ENCODE measurements at regions of chr2 and their contacts with region 1.

Region 1: DNA sequence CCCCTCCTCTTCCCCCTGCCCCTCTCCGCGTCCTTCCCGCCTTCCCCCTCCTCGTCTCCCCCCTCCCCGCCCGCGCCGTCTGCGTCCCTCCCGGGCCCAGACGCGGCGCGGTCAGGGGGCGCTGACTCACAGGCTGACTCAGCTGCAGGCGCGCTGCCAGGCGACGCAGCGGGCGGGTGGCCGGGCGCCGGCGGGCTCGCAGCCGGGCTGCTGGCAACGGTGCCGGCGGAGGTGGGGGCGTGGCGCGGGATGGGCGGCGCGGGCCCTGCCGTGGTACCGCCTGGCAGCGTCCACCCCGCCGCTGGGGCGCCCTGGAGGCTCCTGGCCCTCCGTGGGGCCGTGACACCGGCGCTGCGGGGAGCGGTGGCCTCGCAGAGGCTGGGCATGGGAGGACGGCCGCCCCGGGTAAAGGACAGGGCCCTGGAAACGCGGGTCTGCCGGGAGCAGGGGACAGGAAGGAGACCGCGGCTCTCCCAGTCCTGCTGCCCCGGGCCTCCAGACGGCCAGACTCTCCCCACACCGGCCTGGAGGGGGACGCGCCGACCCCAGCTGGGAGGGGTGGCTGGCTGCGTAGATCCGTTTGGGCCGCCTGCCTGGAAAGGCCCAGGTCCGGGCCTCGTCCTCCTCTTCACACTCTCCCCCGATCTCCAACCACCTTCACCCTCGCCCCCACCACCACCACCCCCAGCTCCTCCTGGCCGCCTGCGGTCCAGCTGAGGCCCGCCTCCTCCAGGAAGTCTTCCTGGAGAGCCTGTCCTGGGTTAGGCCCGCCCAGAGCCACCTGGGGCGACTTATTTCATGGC is 10.0 kb upstream of the PROC start:
- DNase-seq: peak; percentile 97

Region 2: DNA sequence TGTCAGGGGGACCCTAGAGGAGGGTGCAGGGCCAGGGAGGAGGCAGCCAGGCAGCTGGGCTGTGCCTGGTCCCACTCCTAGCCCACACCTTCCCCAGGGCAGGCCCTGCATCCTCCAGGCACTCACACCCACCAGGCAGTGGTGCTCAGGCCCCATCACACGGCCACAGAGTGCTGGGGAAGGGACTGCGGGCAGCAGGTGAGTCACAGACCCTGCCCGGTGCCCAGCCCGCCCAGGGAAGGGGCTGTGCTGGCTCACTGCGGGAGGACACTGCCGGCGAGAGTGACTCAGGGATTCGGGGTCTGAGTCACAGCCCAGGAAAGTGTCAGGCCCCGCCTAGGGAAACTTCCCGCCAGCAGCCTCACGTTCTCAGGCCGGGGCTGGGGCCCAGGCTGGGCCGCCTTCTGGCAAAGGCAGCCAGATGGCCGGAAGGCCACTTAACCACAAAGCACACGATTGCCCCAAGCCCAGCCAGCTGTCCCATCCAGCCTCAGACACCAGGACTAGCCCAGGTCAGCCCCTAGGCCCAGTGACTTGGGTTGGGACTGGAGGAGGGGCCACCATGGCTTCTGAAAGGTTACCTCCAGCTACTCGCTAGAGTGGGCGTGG is 343.5 kb before region 1 on chr2:
- intact Hi-C with region 1: loop called (anchors 10 kb)
- DNase-seq: peak; percentile 93

Region 3: DNA sequence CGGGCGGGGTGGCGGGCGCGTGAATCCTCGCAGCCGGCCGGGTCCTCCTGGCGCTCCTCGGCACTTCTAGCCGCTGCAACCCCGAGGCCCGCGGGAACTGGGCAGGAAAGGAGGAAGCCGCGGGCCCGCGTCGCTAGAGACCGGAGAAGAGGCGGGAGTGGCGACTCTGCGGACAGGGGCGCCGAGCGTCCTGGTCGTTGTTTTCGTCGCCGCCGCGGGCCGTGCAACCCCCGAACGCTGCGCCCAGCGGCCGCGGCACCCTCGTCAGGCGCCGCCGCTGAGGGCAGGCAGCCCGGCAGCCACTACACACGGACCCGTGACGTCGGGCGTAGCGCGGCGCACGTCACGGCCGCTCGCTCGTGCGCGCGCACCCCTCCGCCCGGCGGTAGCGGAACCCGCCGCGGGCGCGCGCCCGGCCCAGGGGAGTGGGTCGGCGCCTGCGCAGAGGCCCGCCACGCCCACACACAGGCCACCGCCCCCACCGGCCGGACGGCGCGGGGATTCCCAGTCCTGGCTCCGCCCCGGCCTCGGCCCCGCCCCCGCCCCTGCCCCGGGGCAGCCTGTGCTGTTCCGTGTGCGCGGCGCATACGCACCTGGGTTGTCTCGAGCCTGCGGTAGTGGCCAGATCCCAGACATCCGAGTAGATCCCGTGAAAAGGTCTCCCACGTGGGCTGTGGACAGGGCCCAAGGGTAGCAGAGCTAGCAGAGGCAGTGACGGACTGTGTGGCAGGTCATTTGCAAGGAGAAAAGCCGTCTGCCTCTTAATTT is 20.4 kb before region 1 on chr2 and contains the start of gene MAP3K2:
- intact Hi-C with region 1: loop called (anchors 2 kb)
- DNase-seq: peak; percentile 97
- total RNA-seq, gene MAP3K2: 31.6 TPM

Region 4: GRCh38 chr2:127675331-127676261 is 267.4 kb after region 1 on chr2 and contains the start of gene LIMS2:
- intact Hi-C with region 1: loop called (anchors 10 kb)
- DNase-seq: no peak
- total RNA-seq, gene LIMS2: 207 TPM

Region 5: GRCh38 chr2:127811397-127812321 is 403.5 kb after region 1 on chr2:
- intact Hi-C with region 1: no loop called
- DNase-seq: peak; percentile 74

Measured in cardiac septum (tissue), 1 donor.